Activated CD8-positive, alpha-beta T cell treated with anti-CD3 and anti-CD28 coated beads, Interleukin-2, amount 10 ng/mL, durations not matched to agents 7 days and 5 days (primary cell): ENCODE measurements at regions of chr10 and their contacts with region 1.

Region 1: DNA sequence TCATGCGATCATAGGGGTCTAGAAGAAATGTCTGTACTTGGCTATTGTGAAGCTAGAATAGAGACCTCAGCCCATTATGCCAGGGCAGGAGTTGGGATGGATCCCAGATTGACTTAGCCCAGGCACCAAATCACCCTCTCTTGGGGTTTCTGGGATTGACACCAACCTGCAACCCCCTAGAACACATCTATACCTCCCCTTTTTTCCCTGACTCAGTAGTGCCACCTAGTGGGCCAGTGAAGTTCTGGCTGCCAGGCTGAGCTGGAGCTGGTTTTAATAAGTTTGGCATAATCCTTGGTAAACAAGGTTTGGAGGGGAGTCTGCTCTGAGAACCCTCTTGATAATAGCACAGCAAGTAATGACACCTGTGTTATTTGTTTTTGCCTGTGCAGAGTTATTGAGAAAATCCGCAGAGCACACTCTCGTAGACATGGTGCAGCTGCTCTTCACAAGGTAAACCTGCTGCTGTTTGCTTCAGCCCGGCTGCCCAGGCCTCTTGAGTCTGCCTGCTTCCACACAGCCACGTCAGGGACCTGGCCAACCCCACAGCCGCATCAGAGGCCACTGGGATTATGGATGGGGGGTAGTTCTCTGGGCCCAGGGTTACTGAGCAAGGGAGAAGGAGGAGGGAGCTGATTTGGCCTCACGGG is 43.3 kb upstream of the NFKB2 start:
- DNase-seq: peak; percentile 81
- ATAC-seq: peak; percentile 78
- H3K4me3 Mint-ChIP-seq: no peak overlapping the region
- H3K27ac Mint-ChIP-seq: no peak overlapping the region
- H3K4me1 Mint-ChIP-seq: no peaks in the 10 kb centered on the region
- H3K27me3 Mint-ChIP-seq: no peaks in the 10 kb centered on the region

Region 2: GRCh38 chr10:102245101-102245931 is 106.9 kb before region 1 on chr10 and contains the start of gene GBF1:
- CTCF ChIA-PET with region 1: interaction called, 742 read pairs
- POLR2A ChIA-PET with region 1: interaction called, 3 read pairs
- DNase-seq: peak; percentile 95
- ATAC-seq: peak; percentile 90
- H3K4me3 Mint-ChIP-seq: peak within 1 kb of the TSS; percentile 99
- H3K27ac Mint-ChIP-seq: peak within 1 kb of the TSS; percentile 89
- H3K4me1 Mint-ChIP-seq: peaks cover 48% of the 10 kb centered on the region
- H3K27me3 Mint-ChIP-seq: peaks cover 14% of the 10 kb centered on the region
- total RNA-seq, gene GBF1: 39.8 to 42.9 TPM

Region 3: DNA sequence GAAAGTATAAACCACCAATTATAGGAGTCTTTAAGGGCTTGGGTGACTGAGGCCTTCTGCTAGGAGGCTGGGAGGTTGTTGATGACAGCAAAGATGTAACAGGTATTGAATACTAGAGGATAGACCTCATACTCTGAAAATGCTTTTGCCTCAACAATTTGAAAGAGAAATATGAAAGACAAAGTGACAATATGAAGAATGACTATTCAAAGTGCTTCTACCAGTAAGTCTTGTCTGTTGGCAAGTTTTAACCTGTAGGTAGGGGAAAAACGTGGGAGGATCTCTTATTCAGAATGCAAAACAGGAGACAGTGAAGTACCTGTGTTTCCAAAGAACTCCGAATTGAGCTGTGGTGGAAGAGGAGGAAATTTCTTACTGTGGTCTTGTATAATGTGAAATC is 68.7 kb before region 1 on chr10:
- CTCF ChIA-PET with region 1: interaction called, 33 read pairs
- POLR2A ChIA-PET with region 1: no interaction called
- DNase-seq: no peak
- ATAC-seq: peak; percentile 15
- H3K4me3 Mint-ChIP-seq: peak overlapping the region; percentile 27
- H3K27ac Mint-ChIP-seq: peak overlapping the region; percentile 73
- H3K4me1 Mint-ChIP-seq: peaks cover 73% of the 10 kb centered on the region
- H3K27me3 Mint-ChIP-seq: no peaks in the 10 kb centered on the region

Region 4: GRCh38 chr10:102322914-102323313 is 29.3 kb before region 1 on chr10:
- CTCF ChIA-PET with region 1: interaction called, 23 read pairs
- POLR2A ChIA-PET with region 1: no interaction called
- DNase-seq: peak; percentile 75
- ATAC-seq: peak; percentile 89
- H3K4me3 Mint-ChIP-seq: no peak overlapping the region
- H3K27ac Mint-ChIP-seq: no peak overlapping the region
- H3K4me1 Mint-ChIP-seq: peaks cover 17% of the 10 kb centered on the region
- H3K27me3 Mint-ChIP-seq: no peaks in the 10 kb centered on the region

Region 5: DNA sequence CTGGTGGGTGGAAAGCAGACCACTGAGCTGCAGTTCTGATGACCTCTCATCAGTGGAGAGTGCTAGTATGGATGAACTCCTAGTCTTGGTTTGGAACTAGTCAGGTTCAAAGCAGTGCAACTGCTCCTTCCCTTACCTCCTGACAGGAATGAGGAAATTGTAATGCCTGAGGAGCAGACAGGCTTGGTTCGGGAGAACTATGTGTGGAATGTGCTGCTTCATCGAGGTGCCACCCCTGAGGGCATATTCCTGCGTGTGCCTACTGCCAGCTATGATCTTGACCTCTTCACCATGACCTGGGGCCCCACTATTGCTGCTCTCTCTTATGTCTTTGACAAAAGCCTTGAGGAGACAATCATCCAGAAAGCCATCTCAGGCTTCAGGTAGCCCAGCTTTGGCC is 15.9 kb after region 1 on chr10:
- CTCF ChIA-PET with region 1: interaction called, 43 read pairs
- POLR2A ChIA-PET with region 1: no interaction called
- DNase-seq: no peak
- ATAC-seq: no peak
- H3K4me3 Mint-ChIP-seq: no peak overlapping the region
- H3K27ac Mint-ChIP-seq: no peak overlapping the region
- H3K4me1 Mint-ChIP-seq: no peaks in the 10 kb centered on the region
- H3K27me3 Mint-ChIP-seq: no peaks in the 10 kb centered on the region

Region 6: DNA sequence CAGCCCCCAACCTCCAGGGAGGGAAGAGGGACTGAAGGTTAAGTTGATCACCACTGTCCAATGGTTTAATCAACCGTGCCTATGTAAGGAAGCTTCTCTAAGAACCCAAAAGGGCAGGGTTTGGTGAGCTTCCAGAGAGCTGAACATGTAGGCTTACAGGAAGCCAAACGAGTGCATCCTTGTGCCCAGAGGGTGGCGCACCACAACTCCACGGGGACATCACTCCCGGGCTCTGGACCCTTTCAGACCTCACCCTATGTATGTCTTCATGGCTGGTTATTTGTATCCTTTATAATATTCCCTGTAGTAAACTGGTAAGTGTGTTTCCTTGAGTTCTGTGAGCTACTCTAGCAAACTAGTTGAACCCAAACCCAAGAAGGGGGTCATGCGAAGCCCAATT is 31.9 kb after region 1 on chr10:
- CTCF ChIA-PET with region 1: interaction called, 13 read pairs
- POLR2A ChIA-PET with region 1: no interaction called
- DNase-seq: no peak
- ATAC-seq: no peak
- H3K4me3 Mint-ChIP-seq: no peak overlapping the region
- H3K27ac Mint-ChIP-seq: no peak overlapping the region
- H3K4me1 Mint-ChIP-seq: no peaks in the 10 kb centered on the region
- H3K27me3 Mint-ChIP-seq: no peaks in the 10 kb centered on the region

Region 7: DNA sequence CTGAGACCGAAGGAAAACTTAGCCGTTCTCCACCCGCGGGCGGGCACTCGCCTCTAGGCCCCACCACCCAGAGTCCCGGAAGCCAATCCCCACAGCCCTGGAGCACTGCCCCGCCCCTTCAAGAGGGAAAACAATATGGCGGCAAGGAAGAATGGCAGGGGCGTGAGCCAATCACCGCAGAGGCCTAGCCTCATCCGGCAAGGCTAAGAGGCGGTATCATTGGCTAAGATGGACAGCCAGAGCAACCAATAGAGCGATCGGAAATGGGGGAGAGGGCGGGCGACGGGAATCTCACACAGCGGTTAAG is 149.8 kb after region 1 on chr10:
- CTCF ChIA-PET with region 1: no interaction called
- POLR2A ChIA-PET with region 1: no interaction called
- DNase-seq: peak; percentile 99
- ATAC-seq: peak; percentile 80
- H3K4me3 Mint-ChIP-seq: no peak overlapping the region
- H3K27ac Mint-ChIP-seq: no peak overlapping the region
- H3K4me1 Mint-ChIP-seq: peaks cover 32% of the 10 kb centered on the region
- H3K27me3 Mint-ChIP-seq: no peaks in the 10 kb centered on the region